Dorsolateral prefrontal cortex (tissue), 120 donors: ENCODE measurements at regions of chr4 and their contacts with region 1.

Region 1: DNA sequence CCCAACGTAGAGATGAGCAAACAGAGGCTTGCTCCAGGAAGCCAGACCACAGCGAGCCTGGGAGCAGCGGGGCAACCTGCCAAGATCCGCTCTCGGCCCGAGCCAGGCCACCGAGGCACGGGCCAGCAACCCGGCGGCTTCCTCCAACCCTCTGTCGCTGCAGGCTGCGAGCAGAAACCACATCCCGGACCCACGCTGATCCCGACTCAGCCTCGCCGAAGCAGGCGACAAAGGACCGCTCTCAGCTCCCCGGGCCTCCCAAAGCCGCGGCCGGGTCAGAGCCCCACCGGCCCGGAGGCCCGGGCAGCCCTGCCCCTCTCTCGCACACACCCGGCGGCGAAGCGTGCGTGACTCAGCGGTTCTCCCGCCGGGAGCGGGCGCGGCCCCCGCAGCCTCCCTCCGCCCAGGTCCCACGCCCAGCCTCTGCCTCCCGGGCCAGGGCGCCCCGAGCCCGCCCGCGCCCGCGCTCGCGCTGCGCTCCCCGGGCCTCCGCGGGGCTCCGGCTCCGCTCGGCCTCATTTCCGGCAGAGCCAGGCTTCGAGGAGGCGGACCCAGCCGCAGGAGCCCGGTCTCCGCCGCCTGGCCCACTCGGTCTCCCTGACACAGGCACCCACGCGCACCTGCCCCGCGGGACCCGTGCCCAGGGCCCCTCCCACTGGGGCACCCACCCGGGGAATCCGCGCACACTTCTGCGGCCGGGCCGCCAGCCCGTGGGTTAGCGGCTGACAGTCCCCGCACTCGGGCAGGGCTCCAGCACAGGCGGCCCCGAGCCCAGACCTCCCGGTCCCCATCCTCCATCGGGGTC is 1.7 kb downstream of the PPP2R2C start:
- DNase-seq: peak in 9 of 10 donors; percentile 68 to 91 (median 80)
- H3K4me3 ChIP-seq: peak overlapping the region; percentile 52 to 85 (median 74)
- H3K27ac ChIP-seq: peak overlapping the region; percentile 85 to 100 (median 97)
- H3K27me3 ChIP-seq: no peaks in the 10 kb centered on the region
- CTCF ChIP-seq: peak in 1 of 56 donors; percentile 13

Region 2: GRCh38 chr4:6269616-6270511 is 200.8 kb before region 1 on chr4 and contains the start of gene WFS1:
- intact Hi-C with region 1: loop called in 1 of 2 experiments (anchors 10 kb)
- DNase-seq: peak; percentile 96 to 99 (median 98)
- H3K4me3 ChIP-seq: peak within 1 kb of the TSS; percentile 56 to 100 (median 93)
- H3K27ac ChIP-seq: peak within 1 kb of the TSS in 53 of 59 donors; percentile 29 to 89 (median 72)
- H3K27me3 ChIP-seq: no peaks in the 10 kb centered on the region
- CTCF ChIP-seq: peak in 27 of 56 donors; percentile 3 to 42 (median 19)
- total RNA-seq, gene WFS1: 39.0 to 119 (median 62.4) TPM

Region 3: GRCh38 chr4:6379767-6380745 is 90.6 kb before region 1 on chr4:
- intact Hi-C with region 1: loop called (anchors 2 to 10 kb)
- DNase-seq: peak in 2 of 10 donors; percentile 23 to 32
- H3K4me3 ChIP-seq: no peak overlapping the region
- H3K27ac ChIP-seq: peak overlapping the region in 18 of 59 donors; percentile 5 to 65 (median 22)
- H3K27me3 ChIP-seq: no peaks in the 10 kb centered on the region
- CTCF ChIP-seq: no peak

Region 4: DNA sequence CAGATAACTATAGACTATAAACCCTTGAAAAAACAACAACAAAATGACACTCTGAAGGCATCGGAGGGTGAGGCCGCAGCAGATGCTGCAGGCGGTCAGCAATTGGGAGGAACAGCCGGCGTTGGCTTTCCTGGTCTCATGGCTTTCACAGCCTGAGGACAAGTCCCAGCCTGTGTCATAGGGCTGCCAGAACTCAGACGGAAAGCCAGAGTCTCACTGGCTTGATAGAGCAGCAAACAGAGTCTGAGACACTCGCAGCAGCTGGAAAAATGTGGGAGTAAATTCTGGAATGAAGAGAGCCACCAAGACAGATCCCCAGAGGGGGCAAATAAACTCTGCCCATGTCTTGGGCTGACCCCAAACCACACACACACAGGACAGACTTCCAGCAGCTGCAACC is 84.6 kb before region 1 on chr4:
- intact Hi-C with region 1: loop called (anchors 2 to 10 kb)
- DNase-seq: no peak
- H3K4me3 ChIP-seq: no peak overlapping the region
- H3K27ac ChIP-seq: peak overlapping the region in 33 of 59 donors; percentile 0 to 80 (median 44)
- H3K27me3 ChIP-seq: no peaks in the 10 kb centered on the region
- CTCF ChIP-seq: peak in 1 of 56 donors; percentile 1

Region 5: DNA sequence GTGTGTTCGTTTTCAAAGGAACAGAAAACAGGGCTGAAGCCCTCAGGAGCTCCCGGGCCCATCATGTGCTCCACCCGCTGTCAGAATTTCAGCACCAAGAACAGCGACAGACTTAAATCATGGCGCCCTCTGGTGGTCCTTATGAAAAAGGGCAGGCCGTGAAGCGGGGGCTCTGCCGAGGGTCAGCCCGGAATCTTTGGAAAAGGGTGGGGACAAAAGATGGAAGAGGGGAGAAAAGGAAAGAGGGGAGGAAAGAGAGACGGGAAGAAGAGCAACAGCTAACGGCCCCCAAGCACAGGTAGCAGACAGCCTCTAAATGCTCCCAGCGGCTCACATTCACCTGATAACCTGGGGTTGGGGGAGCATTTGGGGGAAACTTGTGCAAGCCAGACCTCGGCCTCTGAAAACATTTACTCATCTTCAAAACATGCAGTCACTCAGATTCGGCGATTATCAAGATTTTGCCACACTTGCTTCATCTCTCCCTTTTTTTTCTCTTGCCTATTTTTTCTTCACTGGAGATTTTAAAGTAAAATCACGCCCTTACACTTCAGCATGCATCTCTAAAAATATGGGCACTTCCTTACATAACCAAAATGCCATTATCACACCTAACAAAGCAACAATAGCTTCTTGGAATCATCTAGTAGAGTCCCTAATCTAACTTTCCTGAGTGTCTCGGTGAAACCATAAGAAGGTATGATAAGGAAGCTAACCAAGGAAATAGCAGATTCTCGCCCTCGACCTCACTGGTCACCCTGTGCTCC is 76.2 kb after region 1 on chr4:
- intact Hi-C with region 1: loop called (anchors 5 kb)
- DNase-seq: peak in 5 of 10 donors; percentile 49 to 70 (median 63)
- H3K4me3 ChIP-seq: peak overlapping the region in 3 of 59 donors; percentile 3 to 30 (median 26)
- H3K27ac ChIP-seq: peak overlapping the region in 52 of 59 donors; percentile 8 to 88 (median 69)
- H3K27me3 ChIP-seq: peaks cover 0 to 14% (median 0%) of the 10 kb centered on the region in 45 donors
- CTCF ChIP-seq: peak; percentile 78 to 96 (median 92)

Region 6: GRCh38 chr4:7197910-7198309 is 727.2 kb after region 1 on chr4:
- intact Hi-C with region 1: no loop called
- DNase-seq: peak in 4 of 10 donors; percentile 13 to 41 (median 30)
- H3K4me3 ChIP-seq: no peak overlapping the region
- H3K27ac ChIP-seq: no peak overlapping the region
- H3K27me3 ChIP-seq: peaks cover 0 to 17% (median 0%) of the 10 kb centered on the region in 45 donors
- CTCF ChIP-seq: no peak